Caco-2 (cell line): ENCODE measurements at regions of chr14 and their contacts with region 1.

Region 1: DNA sequence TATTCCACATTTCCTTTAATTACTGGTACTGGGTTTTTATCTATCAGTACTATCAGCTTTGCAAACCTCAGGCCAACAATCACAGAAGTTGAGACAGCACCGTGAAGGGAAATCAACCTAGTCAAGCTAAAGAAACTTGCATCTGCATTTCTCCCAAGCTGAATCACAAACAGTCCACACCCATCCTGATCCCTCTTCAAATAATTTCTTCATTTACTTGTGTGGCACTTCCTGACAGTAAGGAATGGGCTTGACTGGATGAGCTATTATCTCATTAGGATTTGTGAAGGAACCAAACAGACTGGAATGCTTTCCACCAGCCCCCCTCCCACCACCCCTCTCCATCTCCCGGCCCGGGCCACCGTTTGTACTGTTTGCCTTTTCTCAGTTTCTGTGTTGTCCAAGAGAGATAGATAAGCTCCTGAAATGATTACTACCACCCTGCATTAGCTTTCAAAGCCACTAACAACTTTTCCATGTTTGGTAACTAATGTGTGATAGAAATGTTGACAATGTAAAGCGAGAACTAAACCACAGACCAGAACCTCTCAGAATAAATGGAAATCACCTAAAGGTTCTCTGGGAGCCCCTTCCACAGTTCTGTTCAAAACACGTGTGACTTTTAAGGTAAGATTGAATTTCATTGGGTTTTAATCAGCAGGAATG is 236.3 kb downstream of the SLC25A21 start:
- DNase-seq: peak; percentile 67 to 75
- H3K4me3 ChIP-seq: no peak overlapping the region
- H3K4me3 Mint-ChIP-seq: peak overlapping the region; percentile 54
- H3K27ac Mint-ChIP-seq: peak overlapping the region; percentile 36
- H3K4me1 ChIP-seq: peaks cover 34% of the 10 kb centered on the region
- H3K4me1 Mint-ChIP-seq: peaks cover 23% of the 10 kb centered on the region
- H3K27me3 ChIP-seq: no peaks in the 10 kb centered on the region
- H3K27me3 Mint-ChIP-seq: no peaks in the 10 kb centered on the region
- CTCF ChIP-seq: no peak

Region 2: GRCh38 chr14:36661756-36662498 is 274.2 kb before region 1 on chr14 and contains the start of gene PAX9:
- CTCF ChIA-PET with region 1: no interaction called
- POLR2A ChIA-PET with region 1: no interaction called
- intact Hi-C with region 1: loop called (anchors 1 kb)
- DNase-seq: peak; percentile 93 to 95
- H3K4me3 ChIP-seq: peak within 1 kb of the TSS; percentile 64
- H3K4me3 Mint-ChIP-seq: peak within 1 kb of the TSS; percentile 82
- H3K27ac Mint-ChIP-seq: peak within 1 kb of the TSS; percentile 83
- H3K4me1 ChIP-seq: peaks cover 5% of the 10 kb centered on the region; the same call in 1 of the 2 replicates
- H3K4me1 Mint-ChIP-seq: no peaks in the 10 kb centered on the region
- H3K27me3 ChIP-seq: no peaks in the 10 kb centered on the region
- H3K27me3 Mint-ChIP-seq: no peaks in the 10 kb centered on the region
- CTCF ChIP-seq: no peak
- total RNA-seq, gene PAX9: 6.9 and 7.2 TPM in 2 replicates

Region 3: GRCh38 chr14:36773136-36773540 is 163.0 kb before region 1 on chr14:
- CTCF ChIA-PET with region 1: interaction called, 3 read pairs
- POLR2A ChIA-PET with region 1: no interaction called
- intact Hi-C with region 1: loop called (anchors 1 kb)
- DNase-seq: peak; percentile 56 to 58
- H3K4me3 ChIP-seq: no peak overlapping the region
- H3K4me3 Mint-ChIP-seq: no peak overlapping the region
- H3K27ac Mint-ChIP-seq: peak overlapping the region; percentile 57
- H3K4me1 ChIP-seq: peaks cover 51% of the 10 kb centered on the region
- H3K4me1 Mint-ChIP-seq: peaks cover 29% of the 10 kb centered on the region
- H3K27me3 ChIP-seq: no peaks in the 10 kb centered on the region
- H3K27me3 Mint-ChIP-seq: no peaks in the 10 kb centered on the region
- CTCF ChIP-seq: peak; percentile 46 to 48

Region 4: DNA sequence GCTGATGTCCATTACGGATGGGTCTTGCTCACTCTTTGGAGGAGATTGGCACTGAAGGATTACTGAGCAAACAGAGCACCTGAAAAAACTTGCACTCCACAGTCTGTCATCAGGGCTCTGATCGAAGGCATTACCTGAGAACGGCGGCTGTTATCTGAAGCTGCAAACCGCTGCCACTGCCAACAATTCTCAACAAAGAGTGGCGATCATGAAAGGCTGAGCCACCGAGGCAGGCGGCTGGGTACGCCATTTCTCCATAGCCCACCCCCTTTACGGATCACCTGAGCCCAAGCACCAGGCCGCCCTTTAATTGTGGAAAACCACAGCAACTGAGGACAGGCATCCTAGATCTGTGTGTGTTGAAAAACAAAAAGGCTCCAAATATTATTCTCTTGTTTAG is 147.9 kb before region 1 on chr14:
- CTCF ChIA-PET with region 1: no interaction called
- POLR2A ChIA-PET with region 1: no interaction called
- intact Hi-C with region 1: no loop called
- DNase-seq: no peak
- H3K4me3 ChIP-seq: no peak overlapping the region
- H3K4me3 Mint-ChIP-seq: no peak overlapping the region
- H3K27ac Mint-ChIP-seq: no peak overlapping the region
- H3K4me1 ChIP-seq: peaks cover 30% of the 10 kb centered on the region
- H3K4me1 Mint-ChIP-seq: no peaks in the 10 kb centered on the region
- H3K27me3 ChIP-seq: no peaks in the 10 kb centered on the region
- H3K27me3 Mint-ChIP-seq: no peaks in the 10 kb centered on the region
- CTCF ChIP-seq: no peak

Region 5: GRCh38 chr14:36856484-36856883 is 79.7 kb before region 1 on chr14:
- CTCF ChIA-PET with region 1: no interaction called
- POLR2A ChIA-PET with region 1: no interaction called
- intact Hi-C with region 1: loop called (anchors 2 kb)
- DNase-seq: no peak
- H3K4me3 ChIP-seq: no peak overlapping the region
- H3K4me3 Mint-ChIP-seq: peak overlapping the region; percentile 38
- H3K27ac Mint-ChIP-seq: peak overlapping the region; percentile 63
- H3K4me1 ChIP-seq: peaks cover 6% of the 10 kb centered on the region
- H3K4me1 Mint-ChIP-seq: peaks cover 14% of the 10 kb centered on the region
- H3K27me3 ChIP-seq: no peaks in the 10 kb centered on the region
- H3K27me3 Mint-ChIP-seq: no peaks in the 10 kb centered on the region
- CTCF ChIP-seq: no peak

Region 6: GRCh38 chr14:36874396-36875161 is 61.6 kb before region 1 on chr14:
- CTCF ChIA-PET with region 1: no interaction called
- POLR2A ChIA-PET with region 1: no interaction called
- intact Hi-C with region 1: no loop called
- DNase-seq: no peak
- H3K4me3 ChIP-seq: no peak overlapping the region
- H3K4me3 Mint-ChIP-seq: no peak overlapping the region
- H3K27ac Mint-ChIP-seq: no peak overlapping the region
- H3K4me1 ChIP-seq: no peaks in the 10 kb centered on the region
- H3K4me1 Mint-ChIP-seq: no peaks in the 10 kb centered on the region
- H3K27me3 ChIP-seq: no peaks in the 10 kb centered on the region
- H3K27me3 Mint-ChIP-seq: no peaks in the 10 kb centered on the region
- CTCF ChIP-seq: no peak

Region 7: GRCh38 chr14:37048666-37049071 is 112.5 kb after region 1 on chr14:
- CTCF ChIA-PET with region 1: no interaction called
- POLR2A ChIA-PET with region 1: no interaction called
- intact Hi-C with region 1: no loop called
- DNase-seq: no peak
- H3K4me3 ChIP-seq: no peak overlapping the region
- H3K4me3 Mint-ChIP-seq: no peak overlapping the region
- H3K27ac Mint-ChIP-seq: no peak overlapping the region
- H3K4me1 ChIP-seq: no peaks in the 10 kb centered on the region
- H3K4me1 Mint-ChIP-seq: peaks cover 8% of the 10 kb centered on the region
- H3K27me3 ChIP-seq: no peaks in the 10 kb centered on the region
- H3K27me3 Mint-ChIP-seq: no peaks in the 10 kb centered on the region
- CTCF ChIP-seq: no peak